Psoas muscle (tissue), 8 donors: ENCODE measurements at regions of chr17 and their contacts with region 1.

Region 1: GRCh38 chr17:19513897-19514488 is 19.7 kb upstream of the SLC47A1 start:
- DNase-seq: peak; percentile 56 to 72
- ATAC-seq: peak; percentile 79 to 92 (median 81)
- H3K4me3 ChIP-seq: peak overlapping the region; percentile 5
- H3K27ac ChIP-seq: peak overlapping the region; percentile 40
- H3K4me1 ChIP-seq: peaks cover 6% of the 10 kb centered on the region
- H3K27me3 ChIP-seq: no peaks in the 10 kb centered on the region
- CTCF ChIP-seq: peak; percentile 93

Region 2: DNA sequence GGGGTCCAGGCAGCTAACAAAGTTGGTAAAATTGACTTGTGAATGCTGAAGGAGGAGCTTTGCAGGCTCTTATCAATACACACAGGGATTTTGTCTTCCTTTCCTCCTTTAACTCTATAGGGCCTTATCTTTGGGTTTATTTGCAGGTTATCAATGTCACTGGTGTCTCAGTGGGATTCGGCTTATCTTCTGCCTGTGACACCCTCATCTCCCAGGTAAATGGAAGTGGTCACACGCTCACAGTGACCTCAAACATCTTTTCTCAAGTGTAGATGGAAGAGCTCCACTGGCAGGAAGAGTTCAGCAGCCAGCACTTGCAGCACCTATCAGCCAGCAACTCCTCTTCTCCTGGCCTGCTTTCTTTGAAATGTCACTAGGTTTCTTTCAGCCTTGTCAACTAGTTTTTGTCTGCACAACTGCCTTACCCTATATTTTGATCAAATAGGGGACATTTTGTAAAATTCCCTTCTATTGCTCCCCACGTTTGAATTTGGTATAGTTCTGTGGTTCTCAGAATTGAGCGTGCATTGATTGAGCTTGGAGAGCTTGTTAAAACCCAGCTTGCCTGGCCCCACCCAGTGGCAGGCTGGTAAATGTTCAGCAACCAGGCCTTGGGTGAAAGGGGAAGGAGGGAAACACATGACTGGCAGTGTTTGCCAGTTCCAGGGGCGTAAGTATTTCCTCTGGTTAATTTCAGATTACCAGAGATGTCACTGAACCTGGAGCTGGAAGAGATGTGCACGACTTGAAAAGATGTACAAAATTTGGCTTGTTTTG is 32.5 kb after region 1 on chr17:
- intact Hi-C with region 1: loop called in 1 of 2 experiments (anchors 5 kb)
- DNase-seq: peak; percentile 43 to 58
- ATAC-seq: peak in 3 of 4 donors; percentile 64 to 86 (median 84)
- H3K4me3 ChIP-seq: no peak overlapping the region
- H3K27ac ChIP-seq: no peak overlapping the region
- H3K4me1 ChIP-seq: no peaks in the 10 kb centered on the region
- H3K27me3 ChIP-seq: no peaks in the 10 kb centered on the region
- CTCF ChIP-seq: peak; percentile 23

Region 3: GRCh38 chr17:19569785-19570543 is 56.0 kb after region 1 on chr17:
- intact Hi-C with region 1: no loop called
- DNase-seq: no peak
- ATAC-seq: peak; percentile 85 to 96 (median 90)
- H3K4me3 ChIP-seq: no peak overlapping the region
- H3K27ac ChIP-seq: no peak overlapping the region
- H3K4me1 ChIP-seq: no peaks in the 10 kb centered on the region
- H3K27me3 ChIP-seq: no peaks in the 10 kb centered on the region
- CTCF ChIP-seq: no peak